Natural killer cell (primary cell): ENCODE measurements at regions of chr7 and their contacts with region 1.

Region 1: GRCh38 chr7:111741811-111742240 is 179.5 kb upstream of the IMMP2L start:
- DNase-seq: peak in 1 of 2 donors; percentile 72
- ATAC-seq: peak in 2 of 3 donors; percentile 42 to 72
- H3K4me3 ChIP-seq: no peak overlapping the region
- H3K4me3 Mint-ChIP-seq: no peak overlapping the region
- H3K27ac ChIP-seq: no peak overlapping the region
- H3K27ac Mint-ChIP-seq: no peak overlapping the region
- H3K4me1 ChIP-seq: no peaks in the 10 kb centered on the region
- H3K4me1 Mint-ChIP-seq: no peaks in the 10 kb centered on the region
- H3K27me3 ChIP-seq: no peaks in the 10 kb centered on the region
- H3K27me3 Mint-ChIP-seq: no peaks in the 10 kb centered on the region
- CTCF ChIP-seq: peak; percentile 38

Region 2: DNA sequence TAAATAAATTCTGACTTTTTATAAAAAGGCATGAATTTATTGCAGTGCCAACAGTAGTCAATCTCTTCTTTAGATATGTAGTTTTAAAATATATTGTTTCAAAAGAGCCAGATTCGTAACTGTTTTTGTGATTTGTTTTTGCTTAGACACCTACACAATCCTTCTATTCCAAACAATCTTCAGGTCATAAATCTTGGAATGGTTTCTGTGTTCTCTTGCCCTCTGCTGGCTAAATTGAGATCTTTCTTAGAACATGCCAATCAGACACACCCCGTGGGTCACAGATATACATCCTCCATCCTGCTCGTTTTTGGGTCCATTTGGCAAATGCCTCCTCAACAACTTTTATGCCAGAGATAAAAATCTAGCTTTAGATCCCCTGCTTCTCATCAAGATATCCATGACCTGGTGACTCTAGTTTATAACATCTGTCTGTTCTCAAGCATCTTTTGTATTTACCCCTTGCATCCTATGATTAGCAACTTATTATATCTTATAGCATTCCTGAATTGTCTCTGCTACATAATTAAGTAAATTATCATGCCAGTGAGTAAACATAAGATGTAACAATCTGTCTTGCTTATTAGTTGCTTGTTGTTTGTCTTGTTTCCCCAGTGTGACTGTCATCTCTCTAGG is 673.1 kb after region 1 on chr7:
- intact Hi-C with region 1: loop called (anchors 5 kb)
- DNase-seq: peak in 1 of 2 donors; percentile 47
- ATAC-seq: no peak
- H3K4me3 ChIP-seq: no peak overlapping the region
- H3K4me3 Mint-ChIP-seq: no peak overlapping the region
- H3K27ac ChIP-seq: no peak overlapping the region
- H3K27ac Mint-ChIP-seq: no peak overlapping the region
- H3K4me1 ChIP-seq: no peaks in the 10 kb centered on the region
- H3K4me1 Mint-ChIP-seq: no peaks in the 10 kb centered on the region
- H3K27me3 ChIP-seq: no peaks in the 10 kb centered on the region
- H3K27me3 Mint-ChIP-seq: peaks cover 15 to 22% of the 10 kb centered on the region in 2 donors
- CTCF ChIP-seq: peak; percentile 21

Region 3: DNA sequence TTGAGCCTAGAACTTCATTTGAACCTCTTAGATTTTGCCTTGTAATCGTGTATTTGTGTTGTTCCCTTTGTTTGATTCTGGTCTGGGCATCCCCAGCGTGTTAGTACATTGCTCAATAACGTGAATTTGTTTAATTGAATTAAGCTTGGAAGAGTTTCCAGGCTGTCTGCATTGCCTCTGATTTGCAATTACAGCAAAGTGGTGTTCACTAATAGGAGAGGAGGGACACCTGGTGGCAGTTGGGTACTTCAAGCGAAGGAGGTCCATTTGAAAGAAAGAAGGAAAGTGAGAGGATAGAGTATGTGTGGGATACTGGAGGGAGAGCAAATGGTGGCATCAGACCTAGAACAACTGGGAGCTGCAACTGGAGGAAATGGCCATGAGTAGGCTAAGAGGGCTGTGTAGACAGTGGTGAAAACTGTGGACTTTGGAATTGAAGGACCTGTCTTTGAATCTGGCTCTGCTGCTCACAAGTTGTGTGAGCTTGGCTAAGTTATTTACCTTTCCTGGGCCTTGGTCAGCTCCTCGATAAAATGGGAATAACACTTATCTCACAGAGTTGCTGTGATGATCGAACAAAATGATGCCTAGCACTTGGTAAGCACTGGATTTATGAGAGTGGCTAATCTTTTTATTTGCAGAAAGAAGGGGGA is 754.1 kb after region 1 on chr7:
- intact Hi-C with region 1: loop called (anchors 1 kb)
- DNase-seq: peak in 1 of 2 donors; percentile 61
- ATAC-seq: no peak
- H3K4me3 ChIP-seq: no peak overlapping the region
- H3K4me3 Mint-ChIP-seq: no peak overlapping the region
- H3K27ac ChIP-seq: no peak overlapping the region
- H3K27ac Mint-ChIP-seq: no peak overlapping the region
- H3K4me1 ChIP-seq: no peaks in the 10 kb centered on the region
- H3K4me1 Mint-ChIP-seq: no peaks in the 10 kb centered on the region
- H3K27me3 ChIP-seq: no peaks in the 10 kb centered on the region
- H3K27me3 Mint-ChIP-seq: peaks cover 14 to 32% of the 10 kb centered on the region in 2 donors
- CTCF ChIP-seq: peak; percentile 18

Region 4: DNA sequence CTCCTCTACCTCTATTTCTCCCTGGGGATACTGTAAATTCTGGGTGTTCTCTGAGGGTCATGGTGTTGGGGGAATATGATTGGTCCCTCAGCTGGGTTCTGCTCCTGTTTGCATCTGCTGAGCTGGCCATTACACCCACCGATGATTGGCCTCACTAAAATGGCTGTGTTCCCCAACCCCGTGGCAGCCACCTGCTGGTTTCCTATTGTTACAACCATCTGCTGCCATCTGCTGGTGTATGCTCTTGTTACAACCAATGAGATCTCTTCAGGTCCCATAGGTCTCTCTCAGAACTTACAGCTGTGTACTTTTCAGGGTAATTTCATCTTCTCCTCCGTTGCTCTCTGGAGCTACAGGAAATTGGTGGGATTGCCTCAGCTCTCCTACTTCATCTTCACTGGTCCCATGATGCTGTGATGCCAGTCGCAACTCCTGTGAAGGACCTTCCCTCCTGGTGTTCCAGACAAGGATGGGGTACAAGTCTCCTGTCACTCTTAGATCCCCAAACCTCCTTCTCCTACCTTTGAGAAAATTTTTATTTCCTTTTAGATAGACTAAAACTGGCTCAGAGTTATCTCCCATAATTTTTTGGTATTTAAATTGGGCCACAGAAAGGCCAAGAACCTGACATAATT is 1680.0 kb after region 1 on chr7:
- intact Hi-C with region 1: loop called (anchors 2 kb)
- DNase-seq: peak; percentile 29 to 84
- ATAC-seq: peak; percentile 76 to 82 (median 76)
- H3K4me3 ChIP-seq: no peak overlapping the region
- H3K4me3 Mint-ChIP-seq: no peak overlapping the region
- H3K27ac ChIP-seq: no peak overlapping the region
- H3K27ac Mint-ChIP-seq: no peak overlapping the region
- H3K4me1 ChIP-seq: no peaks in the 10 kb centered on the region
- H3K4me1 Mint-ChIP-seq: peaks cover 5% of the 10 kb centered on the region in 2 donors
- H3K27me3 ChIP-seq: no peaks in the 10 kb centered on the region
- H3K27me3 Mint-ChIP-seq: no peaks in the 10 kb centered on the region
- CTCF ChIP-seq: peak; percentile 54